ENCODE measurements at regions of chr10 and their contacts with region 1.

Region 1: DNA sequence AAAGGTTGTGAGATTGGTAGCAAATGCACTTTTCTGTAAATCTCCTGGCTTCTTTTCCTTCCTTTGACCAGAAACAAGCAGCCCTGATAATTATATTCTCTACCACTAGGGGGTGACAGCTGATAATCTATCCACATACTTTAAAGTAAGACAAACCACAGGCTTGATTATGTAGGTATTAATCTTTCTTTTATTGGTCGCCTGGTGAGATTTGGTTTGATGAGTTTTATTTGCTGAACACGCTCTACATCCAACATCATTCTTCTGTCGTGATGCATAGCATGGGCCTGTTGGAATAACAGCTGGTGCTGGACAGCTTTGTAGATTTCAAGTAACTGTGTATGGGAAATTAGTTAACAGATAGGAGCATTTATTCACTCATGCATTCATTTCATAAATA is 63.5 kb downstream of the ZNF365 start:
- DNase-seq: peak; percentile 69
- H3K4me3 ChIP-seq: no peak overlapping the region
- CTCF ChIP-seq: peak; percentile 45

Region 2: GRCh38 chr10:62244780-62245467 is 192.8 kb before region 1 on chr10:
- CTCF ChIA-PET with region 1: interaction called, 19 read pairs
- POLR2A ChIA-PET with region 1: no interaction called
- DNase-seq: no peak
- H3K4me3 ChIP-seq: no peak overlapping the region
- CTCF ChIP-seq: peak; percentile 78

Region 3: GRCh38 chr10:62422068-62422590 is 15.6 kb before region 1 on chr10:
- CTCF ChIA-PET with region 1: interaction called, 38 read pairs
- POLR2A ChIA-PET with region 1: no interaction called
- DNase-seq: peak; percentile 61
- H3K4me3 ChIP-seq: no peak overlapping the region
- CTCF ChIP-seq: no peak

Region 4: GRCh38 chr10:62456611-62457101 is 19.0 kb after region 1 on chr10:
- CTCF ChIA-PET with region 1: interaction called, 74 read pairs
- POLR2A ChIA-PET with region 1: interaction called, 3 read pairs
- DNase-seq: no peak
- H3K4me3 ChIP-seq: no peak overlapping the region
- CTCF ChIP-seq: no peak

Region 5: DNA sequence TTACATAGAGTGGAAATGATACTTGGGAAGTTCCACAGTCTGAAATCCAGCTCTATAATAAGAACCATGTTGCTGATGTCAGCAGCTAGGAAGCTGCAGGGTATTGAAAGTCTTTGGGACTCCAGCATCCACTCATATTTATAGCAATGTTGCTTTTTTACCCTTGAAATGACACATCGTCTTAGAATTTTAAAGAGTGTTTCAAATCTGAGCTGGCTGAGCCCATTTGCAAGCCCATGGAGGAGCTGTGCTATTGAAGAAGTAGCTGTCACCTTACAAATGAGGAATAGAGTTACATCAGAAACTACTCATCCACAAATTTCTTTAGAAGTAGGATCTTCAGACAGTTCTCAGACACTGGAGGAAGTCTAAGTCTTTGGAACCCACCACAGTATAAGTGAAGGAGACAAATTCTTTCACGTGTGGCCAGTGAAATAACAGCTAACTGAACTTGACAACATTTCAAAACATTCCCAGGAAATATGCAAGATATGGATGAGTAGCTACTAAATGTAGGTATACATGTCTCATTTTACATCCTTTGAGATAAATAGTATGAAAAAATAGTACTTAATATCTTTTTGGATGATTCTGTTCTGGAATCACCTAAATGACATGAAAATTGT is 140.1 kb after region 1 on chr10:
- CTCF ChIA-PET with region 1: interaction called, 16 read pairs
- POLR2A ChIA-PET with region 1: interaction called, 5 read pairs
- DNase-seq: peak; percentile 81
- H3K4me3 ChIP-seq: no peak overlapping the region
- CTCF ChIP-seq: no peak

Region 6: DNA sequence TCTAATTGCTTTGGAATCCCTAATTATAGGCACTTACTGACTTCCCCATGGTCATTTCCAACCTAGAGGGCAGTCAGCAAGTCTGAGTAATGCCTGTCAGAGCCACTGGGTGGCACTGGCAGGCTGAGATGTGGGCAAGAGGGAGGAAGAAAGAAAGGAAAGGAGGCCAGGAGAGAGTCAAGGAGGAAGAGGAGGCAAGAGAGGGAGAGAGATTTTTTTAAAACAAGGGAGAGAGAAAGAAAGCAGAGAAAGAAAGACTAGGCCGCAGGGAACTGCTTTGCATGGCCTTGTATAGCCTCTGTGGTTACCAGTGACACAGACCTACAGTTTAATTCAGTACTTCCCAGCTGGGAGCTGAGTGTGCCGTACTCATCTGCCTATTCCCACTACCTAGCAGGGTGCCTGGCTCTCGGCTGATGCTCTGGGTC is 156.4 kb after region 1 on chr10:
- CTCF ChIA-PET with region 1: interaction called, 13 read pairs
- POLR2A ChIA-PET with region 1: no interaction called
- DNase-seq: no peak
- H3K4me3 ChIP-seq: no peak overlapping the region
- CTCF ChIP-seq: peak; percentile 93

Region 7: DNA sequence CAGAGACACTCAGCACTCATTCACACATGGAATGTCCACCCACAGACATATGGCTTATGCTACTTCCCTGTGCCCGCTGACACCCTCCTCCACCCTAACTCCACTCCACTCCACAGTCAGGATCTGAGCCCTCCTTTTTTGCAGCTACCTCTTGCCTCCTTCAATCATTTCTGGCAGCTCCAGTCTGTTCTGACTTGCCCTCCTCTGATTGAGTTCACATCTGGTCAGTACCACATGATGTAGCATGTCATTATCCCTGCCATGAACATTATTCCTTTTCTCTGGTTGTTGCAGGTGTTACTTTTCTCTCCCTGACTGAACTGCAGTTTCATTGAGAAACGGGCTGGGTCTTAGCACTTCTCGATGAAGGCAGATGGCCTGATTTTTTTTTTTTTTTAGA is 508.6 kb after region 1 on chr10:
- CTCF ChIA-PET with region 1: no interaction called
- POLR2A ChIA-PET with region 1: no interaction called
- DNase-seq: no peak
- H3K4me3 ChIP-seq: no peak overlapping the region
- CTCF ChIP-seq: no peak

Region 8: GRCh38 chr10:63083904-63084689 is 646.4 kb after region 1 on chr10:
- CTCF ChIA-PET with region 1: interaction called, 17 read pairs
- POLR2A ChIA-PET with region 1: no interaction called
- DNase-seq: peak; percentile 29
- H3K4me3 ChIP-seq: no peak overlapping the region
- CTCF ChIP-seq: peak; percentile 60

Measured in AG04449 (cell line).